ENCODE measurements at regions of chr2 and their contacts with region 1.

Region 1: GRCh38 chr2:28594289-28595108 is 98.6 kb downstream of the PLB1 start:
- DNase-seq: peak; percentile 86
- ATAC-seq: peak; percentile 84
- H3K4me3 ChIP-seq: peak overlapping the region in 3 of 5 experiments; percentile 25 to 35 (median 28)
- H3K4me3 Mint-ChIP-seq: peak overlapping the region; percentile 58
- H3K27ac ChIP-seq: no peak overlapping the region
- H3K27ac Mint-ChIP-seq: no peak overlapping the region
- H3K4me1 ChIP-seq: peaks cover 3 to 9% of the 10 kb centered on the region in 2 donors
- H3K4me1 Mint-ChIP-seq: peaks cover 10% of the 10 kb centered on the region
- H3K27me3 ChIP-seq: no peaks in the 10 kb centered on the region
- H3K27me3 Mint-ChIP-seq: peaks cover 7% of the 10 kb centered on the region
- CTCF ChIP-seq: peak; percentile 84

Region 2: GRCh38 chr2:28566521-28567041 is 27.9 kb before region 1 on chr2:
- CTCF ChIA-PET with region 1: interaction called, 38 read pairs
- POLR2A ChIA-PET with region 1: no interaction called
- intact Hi-C with region 1: loop called (anchors 1 kb)
- DNase-seq: peak; percentile 91
- ATAC-seq: peak; percentile 99
- H3K4me3 ChIP-seq: peak overlapping the region; percentile 36 to 90 (median 70)
- H3K4me3 Mint-ChIP-seq: peak overlapping the region; percentile 95
- H3K27ac ChIP-seq: no peak overlapping the region
- H3K27ac Mint-ChIP-seq: peak overlapping the region; percentile 72
- H3K4me1 ChIP-seq: peaks cover 5 to 11% of the 10 kb centered on the region in 2 donors
- H3K4me1 Mint-ChIP-seq: peaks cover 11% of the 10 kb centered on the region
- H3K27me3 ChIP-seq: peaks cover 0 to 5% (median 2%) of the 10 kb centered on the region in 4 experiments
- H3K27me3 Mint-ChIP-seq: peaks cover 14% of the 10 kb centered on the region
- CTCF ChIP-seq: peak; percentile 100

Region 3: GRCh38 chr2:28621172-28622100 is 26.9 kb after region 1 on chr2:
- CTCF ChIA-PET with region 1: interaction called, 12 read pairs
- POLR2A ChIA-PET with region 1: no interaction called
- intact Hi-C with region 1: no loop called
- DNase-seq: peak; percentile 71
- ATAC-seq: peak; percentile 62
- H3K4me3 ChIP-seq: peak overlapping the region in 2 of 5 experiments; percentile 11 to 36
- H3K4me3 Mint-ChIP-seq: peak overlapping the region; percentile 73
- H3K27ac ChIP-seq: peak overlapping the region; percentile 27 to 31
- H3K27ac Mint-ChIP-seq: peak overlapping the region; percentile 90
- H3K4me1 ChIP-seq: peaks cover 31 to 39% of the 10 kb centered on the region in 2 donors
- H3K4me1 Mint-ChIP-seq: peaks cover 47% of the 10 kb centered on the region
- H3K27me3 ChIP-seq: peaks cover 0 to 4% (median 0%) of the 10 kb centered on the region in 4 experiments
- H3K27me3 Mint-ChIP-seq: peaks cover 4% of the 10 kb centered on the region
- CTCF ChIP-seq: no peak

Region 4: GRCh38 chr2:28637066-28638047 is 42.9 kb after region 1 on chr2:
- CTCF ChIA-PET with region 1: no interaction called
- POLR2A ChIA-PET with region 1: no interaction called
- intact Hi-C with region 1: no loop called
- DNase-seq: no peak
- ATAC-seq: no peak
- H3K4me3 ChIP-seq: no peak overlapping the region
- H3K4me3 Mint-ChIP-seq: no peak overlapping the region
- H3K27ac ChIP-seq: no peak overlapping the region
- H3K27ac Mint-ChIP-seq: no peak overlapping the region
- H3K4me1 ChIP-seq: no peaks in the 10 kb centered on the region
- H3K4me1 Mint-ChIP-seq: no peaks in the 10 kb centered on the region
- H3K27me3 ChIP-seq: no peaks in the 10 kb centered on the region
- H3K27me3 Mint-ChIP-seq: no peaks in the 10 kb centered on the region
- CTCF ChIP-seq: no peak

Region 5: GRCh38 chr2:28729698-28730097 is 135.2 kb after region 1 on chr2:
- CTCF ChIA-PET with region 1: interaction called, 17 read pairs
- POLR2A ChIA-PET with region 1: no interaction called
- intact Hi-C with region 1: no loop called
- DNase-seq: no peak
- ATAC-seq: no peak
- H3K4me3 ChIP-seq: no peak overlapping the region
- H3K4me3 Mint-ChIP-seq: no peak overlapping the region
- H3K27ac ChIP-seq: no peak overlapping the region
- H3K27ac Mint-ChIP-seq: no peak overlapping the region
- H3K4me1 ChIP-seq: peaks cover 6 to 9% of the 10 kb centered on the region in 2 donors
- H3K4me1 Mint-ChIP-seq: peaks cover 10% of the 10 kb centered on the region
- H3K27me3 ChIP-seq: no peaks in the 10 kb centered on the region
- H3K27me3 Mint-ChIP-seq: no peaks in the 10 kb centered on the region
- CTCF ChIP-seq: no peak

Region 6: GRCh38 chr2:28810384-28811285 is 216.1 kb after region 1 on chr2 and contains the start of gene SPDYA:
- CTCF ChIA-PET with region 1: interaction called, 5 read pairs
- POLR2A ChIA-PET with region 1: no interaction called
- intact Hi-C with region 1: loop called (anchors 5 kb)
- DNase-seq: peak; percentile 81
- ATAC-seq: peak; percentile 95
- H3K4me3 ChIP-seq: peak within 1 kb of the TSS in 4 of 5 experiments; percentile 43 to 75 (median 56)
- H3K4me3 Mint-ChIP-seq: peak within 1 kb of the TSS; percentile 86
- H3K27ac ChIP-seq: no peak within 1 kb of the TSS
- H3K27ac Mint-ChIP-seq: peak within 1 kb of the TSS; percentile 65
- H3K4me1 ChIP-seq: peaks cover 12 to 16% of the 10 kb centered on the region in 2 donors
- H3K4me1 Mint-ChIP-seq: peaks cover 14% of the 10 kb centered on the region
- H3K27me3 ChIP-seq: peaks cover 0 to 7% (median 0%) of the 10 kb centered on the region in 4 experiments
- H3K27me3 Mint-ChIP-seq: no peaks in the 10 kb centered on the region
- CTCF ChIP-seq: no peak
- total RNA-seq, gene SPDYA: 2.8 and 3.5 TPM in 2 replicates

Measured in B cell (primary cell).